SK-N-SH (cell line): ENCODE measurements at regions of chr5 and their contacts with region 1.

Region 1: DNA sequence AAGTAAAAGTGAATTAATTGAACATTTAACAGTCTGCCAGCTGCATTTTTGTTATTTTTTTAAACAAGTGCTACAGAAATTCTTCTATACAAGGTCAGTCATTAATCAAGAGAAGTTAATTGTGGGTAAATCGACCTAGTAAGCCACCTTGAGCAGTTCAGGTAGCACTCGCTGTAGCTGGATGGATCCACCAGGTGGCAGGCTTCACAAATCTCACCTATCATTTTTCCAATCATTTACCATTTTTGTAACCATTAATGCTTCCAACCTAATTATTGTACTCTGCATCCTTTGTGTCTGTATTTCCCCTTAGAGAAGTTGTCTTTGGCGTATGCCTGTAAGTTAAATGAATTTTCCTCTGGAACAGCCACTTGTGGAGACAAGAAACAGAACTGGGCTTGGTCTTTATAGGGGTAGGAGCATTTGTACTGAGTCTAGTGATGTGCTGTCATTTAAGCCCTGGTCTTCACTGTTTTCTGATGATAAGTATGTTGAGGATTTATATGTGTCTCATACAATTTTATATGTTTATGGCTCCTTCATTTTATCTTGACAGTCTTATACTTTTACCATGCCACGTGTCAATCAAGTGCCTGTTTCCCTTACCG is 39.5 kb downstream of the CD180 start:
- DNase-seq: peak; percentile 57
- H3K4me3 ChIP-seq: no peak overlapping the region; a peak in 1 of 4 replicates
- H3K27ac ChIP-seq: peak overlapping the region in 1 of 2 experiments; percentile 50; a peak in 2 of 4 replicates
- H3K4me1 ChIP-seq: peaks cover 11 to 14% of the 10 kb centered on the region in 2 experiments; a peak in 2 of 4 replicates
- H3K27me3 ChIP-seq: no peaks in the 10 kb centered on the region
- CTCF ChIP-seq: peak; percentile 89
- EP300 ChIP-seq: peak in 1 of 2 experiments; percentile 26; a peak in 1 of 4 replicates
- RAD21 ChIP-seq: peak; percentile 78

Region 2: GRCh38 chr5:67010684-67011409 is 146.2 kb before region 1 on chr5:
- CTCF ChIA-PET with region 1: no interaction called
- POLR2A ChIA-PET with region 1: no interaction called
- DNase-seq: no peak
- H3K4me3 ChIP-seq: peak overlapping the region; percentile 19 to 35; a peak in 2 of 4 replicates
- H3K27ac ChIP-seq: peak overlapping the region; percentile 81 to 85
- H3K4me1 ChIP-seq: peaks cover 25 to 26% of the 10 kb centered on the region in 2 experiments
- H3K27me3 ChIP-seq: no peaks in the 10 kb centered on the region
- CTCF ChIP-seq: no peak
- EP300 ChIP-seq: peak; percentile 20 to 89; a peak in 2 of 4 replicates
- RAD21 ChIP-seq: no peak

Region 3: GRCh38 chr5:67038817-67039603 is 118.1 kb before region 1 on chr5:
- CTCF ChIA-PET with region 1: no interaction called
- POLR2A ChIA-PET with region 1: no interaction called
- DNase-seq: no peak
- H3K4me3 ChIP-seq: no peak overlapping the region
- H3K27ac ChIP-seq: peak overlapping the region; percentile 28 to 51; a peak in 3 of 4 replicates
- H3K4me1 ChIP-seq: peaks cover 4 to 5% of the 10 kb centered on the region in 2 experiments; a peak in 2 of 4 replicates
- H3K27me3 ChIP-seq: no peaks in the 10 kb centered on the region
- CTCF ChIP-seq: no peak
- EP300 ChIP-seq: no peak
- RAD21 ChIP-seq: no peak

Region 4: DNA sequence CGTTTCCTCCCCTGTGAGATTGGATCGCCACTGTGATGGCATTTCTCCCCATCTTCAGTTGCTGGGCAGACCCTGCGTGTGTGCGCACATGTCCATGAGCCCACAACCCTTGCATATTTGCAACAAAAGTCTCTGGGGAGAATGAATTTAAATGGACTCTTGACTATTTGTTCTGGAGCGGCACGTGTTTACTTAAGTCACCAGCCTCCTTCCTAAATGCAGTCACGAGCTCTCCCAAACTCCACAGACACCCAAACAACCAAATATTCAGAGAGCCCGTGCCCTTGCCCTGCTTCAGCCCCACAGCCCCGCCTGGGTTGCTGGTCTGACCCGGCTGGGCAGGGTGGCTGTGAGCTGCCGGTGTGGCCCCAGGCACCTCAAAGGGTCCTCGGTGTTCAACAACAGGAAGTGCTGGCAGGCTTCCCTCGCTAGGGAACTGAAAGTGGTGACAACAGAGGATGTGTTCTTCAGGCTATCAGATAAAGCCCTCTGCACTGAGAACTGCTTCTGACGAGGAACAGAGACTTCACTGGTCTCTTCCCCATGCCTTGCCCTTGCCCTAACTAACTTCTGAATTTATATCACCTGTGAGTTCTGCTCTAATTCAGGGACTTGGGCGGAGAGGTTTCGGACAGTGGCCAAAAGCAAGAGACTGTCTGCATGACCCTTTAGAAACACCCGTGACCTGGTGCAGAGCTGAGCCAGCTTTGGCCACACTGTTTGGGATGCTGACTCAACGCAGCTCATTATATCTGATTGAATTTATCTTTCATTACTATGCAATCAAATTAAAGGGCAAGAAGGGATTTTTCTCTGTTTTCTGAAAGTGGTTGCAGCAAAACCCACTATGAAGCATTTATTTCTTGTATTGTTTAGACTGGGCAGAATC is 58.7 kb after region 1 on chr5:
- CTCF ChIA-PET with region 1: interaction called, 201 read pairs
- POLR2A ChIA-PET with region 1: no interaction called
- DNase-seq: peak; percentile 56
- H3K4me3 ChIP-seq: no peak overlapping the region
- H3K27ac ChIP-seq: peak overlapping the region in 1 of 2 experiments; percentile 25; a peak in 2 of 4 replicates
- H3K4me1 ChIP-seq: peaks cover 4 to 15% of the 10 kb centered on the region in 2 experiments; a peak in 1 of 4 replicates
- H3K27me3 ChIP-seq: no peaks in the 10 kb centered on the region
- CTCF ChIP-seq: no peak
- EP300 ChIP-seq: no peak; a peak in 1 of 4 replicates
- RAD21 ChIP-seq: no peak

Region 5: GRCh38 chr5:67248703-67249589 is 91.9 kb after region 1 on chr5:
- CTCF ChIA-PET with region 1: no interaction called
- POLR2A ChIA-PET with region 1: no interaction called
- DNase-seq: no peak
- H3K4me3 ChIP-seq: no peak overlapping the region; a peak in 1 of 4 replicates
- H3K27ac ChIP-seq: peak overlapping the region; percentile 67 to 78; a peak in 3 of 4 replicates
- H3K4me1 ChIP-seq: peaks cover 10 to 49% of the 10 kb centered on the region in 2 experiments
- H3K27me3 ChIP-seq: no peaks in the 10 kb centered on the region
- CTCF ChIP-seq: no peak
- EP300 ChIP-seq: peak in 1 of 2 experiments; percentile 85; a peak in 3 of 4 replicates
- RAD21 ChIP-seq: peak; percentile 13; the same call in 1 of the 2 replicates